ENCODE measurements at regions of chrX and their contacts with region 1.

Region 1: GRCh38 chrX:12567857-12568256 is 223.4 kb upstream of the PRPS2 start:
- DNase-seq: no peak
- ATAC-seq: no peak

Region 2: DNA sequence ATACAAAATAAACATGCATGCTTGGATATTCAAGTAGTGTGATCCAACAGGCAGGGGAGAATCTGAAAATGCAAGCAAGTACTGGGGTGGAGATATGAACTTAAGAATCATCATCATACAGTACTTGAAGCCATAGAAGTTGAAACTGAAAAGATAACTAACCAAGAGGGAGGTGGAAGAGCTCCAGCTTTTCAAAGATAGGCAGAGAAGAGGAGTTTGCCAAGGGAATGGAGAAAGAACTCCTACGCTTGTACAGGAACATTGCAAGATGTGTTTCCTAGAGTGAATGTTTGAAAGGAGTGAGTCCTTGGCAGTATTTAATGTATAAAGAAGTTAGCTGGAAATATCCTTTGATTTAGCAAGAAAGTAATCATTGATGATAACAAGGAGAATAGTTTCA is 535.8 kb before region 1 on chrX:
- intact Hi-C with region 1: loop called (anchors 5 kb)
- DNase-seq: no peak
- ATAC-seq: no peak

Measured in sciatic nerve (tissue), 2 donors.